HEK293 (cell line): ENCODE measurements at regions of chr17 and their contacts with region 1.

Region 1: DNA sequence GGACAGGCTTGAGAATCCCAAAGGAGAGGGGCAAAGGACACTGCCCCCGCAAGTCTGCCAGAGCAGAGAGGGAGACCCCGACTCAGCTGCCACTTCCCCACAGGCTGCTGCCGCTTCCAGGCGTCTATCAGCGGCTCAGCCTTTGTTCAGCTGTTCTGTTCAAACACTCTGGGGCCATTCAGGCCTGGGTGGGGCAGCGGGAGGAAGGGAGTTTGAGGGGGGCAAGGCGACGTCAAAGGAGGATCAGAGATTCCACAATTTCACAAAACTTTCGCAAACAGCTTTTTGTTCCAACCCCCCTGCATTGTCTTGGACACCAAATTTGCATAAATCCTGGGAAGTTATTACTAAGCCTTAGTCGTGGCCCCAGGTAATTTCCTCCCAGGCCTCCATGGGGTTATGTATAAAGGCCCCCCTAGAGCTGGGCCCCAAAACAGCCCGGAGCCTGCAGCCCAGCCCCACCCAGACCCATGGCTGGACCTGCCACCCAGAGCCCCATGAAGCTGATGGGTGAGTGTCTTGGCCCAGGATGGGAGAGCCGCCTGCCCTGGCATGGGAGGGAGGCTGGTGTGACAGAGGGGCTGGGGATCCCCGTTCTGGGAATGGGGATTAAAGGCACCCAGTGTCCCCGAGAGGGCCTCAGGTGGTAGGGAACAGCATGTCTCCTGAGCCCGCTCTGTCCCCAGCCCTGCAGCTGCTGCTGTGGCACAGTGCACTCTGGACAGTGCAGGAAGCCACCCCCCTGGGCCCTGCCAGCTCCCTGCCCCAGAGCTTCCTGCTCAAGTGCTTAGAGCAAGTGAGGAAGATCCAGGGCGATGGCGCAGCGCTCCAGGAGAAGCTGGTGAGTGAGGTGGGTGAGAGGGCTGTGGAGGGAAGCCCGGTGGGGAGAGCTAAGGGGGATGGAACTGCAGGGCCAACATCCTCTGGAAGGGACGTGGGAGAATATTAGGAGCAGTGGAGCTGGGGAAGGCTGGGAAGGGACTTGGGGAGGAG is at the start of gene CSF3:
- H3K4me3 ChIP-seq: no peak within 1 kb of the TSS
- H3K27ac ChIP-seq: no peak within 1 kb of the TSS
- H3K4me1 ChIP-seq: no peaks in the 10 kb centered on the region
- CTCF ChIP-seq: no peak

Region 2: DNA sequence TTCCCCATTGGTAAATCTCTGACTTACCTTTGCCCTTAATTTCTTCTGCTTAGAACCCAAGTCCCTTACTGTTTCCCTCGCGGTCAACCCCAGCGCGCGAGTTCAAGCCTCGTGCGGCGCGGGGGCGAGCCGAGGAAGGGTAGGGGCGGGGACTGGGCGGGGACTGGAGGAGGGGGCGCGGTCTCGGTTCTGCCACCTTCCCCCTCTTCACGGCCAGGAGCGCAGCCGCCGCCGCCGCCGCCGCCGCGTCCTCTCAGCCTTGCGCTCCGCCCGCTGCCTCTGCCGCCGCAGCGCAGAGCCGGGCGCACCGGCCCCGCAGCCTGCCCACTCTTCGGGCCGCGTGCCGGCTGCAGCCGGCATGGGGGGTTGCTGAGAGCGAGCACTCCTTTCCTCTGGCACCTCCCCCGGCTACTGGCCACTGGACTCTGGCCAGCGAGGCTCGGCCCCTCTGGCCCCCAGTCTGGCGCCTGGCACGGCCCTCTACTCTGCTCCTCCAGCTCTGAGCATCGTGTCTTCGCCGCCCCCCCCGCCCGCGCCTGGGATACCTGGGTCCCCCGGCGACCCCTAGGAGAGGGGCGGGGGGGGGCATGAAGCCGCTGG is 162.1 kb after region 1 on chr17 and contains the start of gene RAPGEFL1:
- CTCF ChIA-PET with region 1: interaction called, 10 read pairs
- POLR2A ChIA-PET with region 1: no interaction called
- H3K4me3 ChIP-seq: peak within 1 kb of the TSS; percentile 12; the same call in 1 of the 2 replicates
- H3K27ac ChIP-seq: no peak within 1 kb of the TSS
- H3K4me1 ChIP-seq: peaks cover 9% of the 10 kb centered on the region
- CTCF ChIP-seq: no peak